Activated CD4-positive, alpha-beta T cell treated with anti-CD3 and anti-CD28 coated beads, Interleukin-2, amount 10 ng/mL, durations not matched to agents 24 days and 14 days (primary cell): ENCODE measurements at regions of chr5 and their contacts with region 1.

Region 1: GRCh38 chr5:181052672-181053487 is 12.8 kb downstream of the BTNL9 start:
- DNase-seq: peak; percentile 66
- H3K4me3 Mint-ChIP-seq: peak overlapping the region; percentile 75
- H3K27ac Mint-ChIP-seq: no peak overlapping the region
- H3K4me1 Mint-ChIP-seq: peaks cover 11% of the 10 kb centered on the region
- H3K27me3 Mint-ChIP-seq: peaks cover 66% of the 10 kb centered on the region

Region 2: GRCh38 chr5:180315762-180316212 is 737.1 kb before region 1 on chr5:
- intact Hi-C with region 1: no loop called
- DNase-seq: peak; percentile 91
- H3K4me3 Mint-ChIP-seq: no peak overlapping the region
- H3K27ac Mint-ChIP-seq: no peak overlapping the region
- H3K4me1 Mint-ChIP-seq: no peaks in the 10 kb centered on the region
- H3K27me3 Mint-ChIP-seq: no peaks in the 10 kb centered on the region

Region 3: GRCh38 chr5:180784497-180785097 is 268.3 kb before region 1 on chr5:
- intact Hi-C with region 1: loop called (anchors 5 kb)
- DNase-seq: peak; percentile 89
- H3K4me3 Mint-ChIP-seq: no peak overlapping the region
- H3K27ac Mint-ChIP-seq: no peak overlapping the region
- H3K4me1 Mint-ChIP-seq: peaks cover 14% of the 10 kb centered on the region
- H3K27me3 Mint-ChIP-seq: no peaks in the 10 kb centered on the region

Region 4: DNA sequence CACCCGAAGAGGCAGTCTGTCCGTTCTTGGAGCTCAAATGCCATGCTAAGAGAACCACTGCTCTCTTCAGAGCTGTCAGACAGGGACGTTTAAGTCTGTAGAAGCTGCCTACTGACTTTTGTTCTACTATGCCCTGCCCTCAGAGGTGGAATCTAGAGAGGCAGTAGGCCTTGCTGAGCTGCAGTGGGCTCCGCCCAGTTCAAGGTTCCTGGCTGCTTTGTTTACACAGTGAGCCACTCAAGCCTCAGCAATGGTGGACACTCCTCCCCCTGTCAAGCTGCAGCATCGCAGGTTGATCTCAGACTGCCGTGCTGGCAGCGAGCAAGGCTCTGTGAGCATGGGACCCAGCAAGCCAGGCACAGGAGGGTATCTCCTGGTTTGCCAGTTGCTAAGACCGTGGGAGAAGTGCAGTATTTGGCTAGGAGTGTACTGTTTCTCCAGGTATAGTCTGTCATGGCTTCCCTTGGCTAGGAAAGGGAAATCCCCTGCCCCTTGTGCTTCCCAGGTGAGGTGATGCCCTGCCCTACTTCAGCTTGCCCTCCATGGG is 166.9 kb before region 1 on chr5:
- intact Hi-C with region 1: no loop called
- DNase-seq: no peak
- H3K4me3 Mint-ChIP-seq: no peak overlapping the region
- H3K27ac Mint-ChIP-seq: no peak overlapping the region
- H3K4me1 Mint-ChIP-seq: no peaks in the 10 kb centered on the region
- H3K27me3 Mint-ChIP-seq: peaks cover 29% of the 10 kb centered on the region

Region 5: GRCh38 chr5:181167814-181168488 is 115.1 kb after region 1 on chr5:
- intact Hi-C with region 1: loop called (anchors 5 kb)
- DNase-seq: peak; percentile 78
- H3K4me3 Mint-ChIP-seq: no peak overlapping the region
- H3K27ac Mint-ChIP-seq: no peak overlapping the region
- H3K4me1 Mint-ChIP-seq: peaks cover 59% of the 10 kb centered on the region
- H3K27me3 Mint-ChIP-seq: peaks cover 55% of the 10 kb centered on the region